Activated CD4-positive, alpha-beta T cell treated with anti-CD3 and anti-CD28 coated beads, Interleukin-2, amount 10 ng/mL, durations not matched to agents 24 days and 14 days (primary cell): ENCODE measurements at regions of chr11 and their contacts with region 1.

Region 1: GRCh38 chr11:130213143-130213978 is 53.8 kb downstream of the ST14 start:
- DNase-seq: peak; percentile 93
- H3K4me3 Mint-ChIP-seq: no peak overlapping the region
- H3K27ac Mint-ChIP-seq: no peak overlapping the region
- H3K4me1 Mint-ChIP-seq: no peaks in the 10 kb centered on the region
- H3K27me3 Mint-ChIP-seq: peaks cover 2% of the 10 kb centered on the region

Region 2: DNA sequence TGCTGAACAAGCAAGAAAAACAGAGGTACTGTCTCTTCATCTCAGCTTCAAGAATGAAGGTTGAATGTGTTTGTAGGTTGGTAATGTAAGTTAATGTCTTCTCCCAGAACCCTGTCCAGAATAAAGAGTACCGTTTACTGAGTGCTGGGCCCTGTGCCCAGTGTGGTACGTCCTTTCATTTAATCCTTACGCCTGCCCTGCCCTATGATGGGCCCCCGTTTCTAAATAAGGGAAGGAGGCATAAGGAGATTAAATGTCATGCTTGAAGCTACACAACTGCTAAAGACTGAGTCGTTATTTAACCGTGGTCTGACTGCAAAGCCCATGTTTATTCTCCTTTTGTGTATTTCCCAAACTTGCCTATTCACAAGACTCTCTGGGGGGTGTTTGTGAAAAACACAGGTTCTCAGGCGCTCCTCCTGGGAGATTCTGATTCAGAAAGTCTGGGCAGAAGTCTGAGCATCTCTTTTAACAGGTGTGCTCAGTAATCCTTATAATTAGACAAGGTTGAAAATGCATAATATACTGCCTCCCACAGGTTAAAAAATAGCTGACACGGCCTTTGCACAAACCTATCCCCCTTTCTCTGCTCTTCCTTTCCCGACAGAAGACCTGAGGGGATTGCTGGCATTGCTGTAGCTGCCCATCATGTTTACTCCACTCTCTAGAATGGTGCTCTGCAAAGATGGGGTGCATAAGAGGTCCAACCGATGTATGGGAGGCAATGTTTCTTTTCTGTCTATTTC is 157.7 kb after region 1 on chr11:
- intact Hi-C with region 1: loop called (anchors 1 kb)
- DNase-seq: no peak
- H3K4me3 Mint-ChIP-seq: no peak overlapping the region
- H3K27ac Mint-ChIP-seq: no peak overlapping the region
- H3K4me1 Mint-ChIP-seq: no peaks in the 10 kb centered on the region
- H3K27me3 Mint-ChIP-seq: no peaks in the 10 kb centered on the region

Region 3: DNA sequence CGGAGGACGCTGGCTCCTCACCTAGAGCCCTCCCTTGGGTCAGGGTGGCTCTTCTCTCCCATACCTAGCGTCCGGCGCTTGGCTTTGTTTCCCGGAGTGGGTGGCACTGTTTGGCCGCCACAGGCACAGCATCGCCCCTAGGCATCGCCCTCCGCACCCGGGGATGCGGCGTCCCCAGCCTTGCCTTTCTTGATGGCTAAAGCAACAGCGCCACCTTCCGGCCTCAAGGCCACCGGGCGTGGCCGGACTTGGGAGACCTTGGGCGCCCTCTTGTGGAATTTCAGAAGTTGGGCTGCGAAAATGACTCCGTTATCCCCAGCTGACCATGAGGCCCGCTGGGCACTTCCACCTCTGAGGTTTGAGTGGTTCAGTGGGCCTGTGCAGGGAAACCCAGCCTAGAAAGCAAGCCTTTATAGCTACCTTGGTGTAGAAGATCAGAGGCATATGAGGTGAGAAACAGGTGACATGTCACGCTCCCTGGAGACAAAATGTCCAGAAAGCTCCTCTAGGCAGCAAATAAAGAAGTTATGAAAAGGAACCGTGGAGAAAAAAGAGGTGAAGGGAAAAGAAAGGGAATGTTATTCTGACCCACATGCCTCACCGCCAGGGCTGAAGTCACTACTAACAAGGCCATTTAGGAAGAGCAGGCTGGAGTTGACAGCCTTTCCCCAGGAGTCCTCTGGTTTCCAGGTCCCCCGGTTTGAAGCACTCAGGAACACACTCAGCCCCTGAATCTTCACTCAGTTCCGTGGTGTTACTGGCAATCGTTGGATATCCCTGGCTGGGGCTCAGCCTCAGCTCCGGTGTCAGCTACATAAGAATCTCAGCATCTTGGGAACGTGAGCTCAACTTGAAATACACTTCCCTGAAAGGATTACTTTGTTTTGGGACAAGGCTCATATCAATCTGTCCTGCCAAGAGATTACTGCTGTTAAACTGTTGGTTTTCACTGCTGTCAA is 648.8 kb after region 1 on chr11:
- intact Hi-C with region 1: loop called (anchors 5 kb)
- DNase-seq: peak; percentile 96
- H3K4me3 Mint-ChIP-seq: no peak overlapping the region
- H3K27ac Mint-ChIP-seq: no peak overlapping the region
- H3K4me1 Mint-ChIP-seq: no peaks in the 10 kb centered on the region
- H3K27me3 Mint-ChIP-seq: peaks cover under 1% of the 10 kb centered on the region